ENCODE measurements at regions of chr17 and their contacts with region 1.

Region 1: GRCh38 chr17:21275579-21276263 is 8.8 kb upstream of the MAP2K3 start:
- DNase-seq: peak; percentile 80
- H3K4me3 Mint-ChIP-seq: peak overlapping the region; percentile 77
- H3K27ac Mint-ChIP-seq: peak overlapping the region; percentile 75
- H3K4me1 Mint-ChIP-seq: peaks cover 19% of the 10 kb centered on the region
- H3K27me3 Mint-ChIP-seq: no peaks in the 10 kb centered on the region
- CTCF ChIP-seq: no peak

Region 2: DNA sequence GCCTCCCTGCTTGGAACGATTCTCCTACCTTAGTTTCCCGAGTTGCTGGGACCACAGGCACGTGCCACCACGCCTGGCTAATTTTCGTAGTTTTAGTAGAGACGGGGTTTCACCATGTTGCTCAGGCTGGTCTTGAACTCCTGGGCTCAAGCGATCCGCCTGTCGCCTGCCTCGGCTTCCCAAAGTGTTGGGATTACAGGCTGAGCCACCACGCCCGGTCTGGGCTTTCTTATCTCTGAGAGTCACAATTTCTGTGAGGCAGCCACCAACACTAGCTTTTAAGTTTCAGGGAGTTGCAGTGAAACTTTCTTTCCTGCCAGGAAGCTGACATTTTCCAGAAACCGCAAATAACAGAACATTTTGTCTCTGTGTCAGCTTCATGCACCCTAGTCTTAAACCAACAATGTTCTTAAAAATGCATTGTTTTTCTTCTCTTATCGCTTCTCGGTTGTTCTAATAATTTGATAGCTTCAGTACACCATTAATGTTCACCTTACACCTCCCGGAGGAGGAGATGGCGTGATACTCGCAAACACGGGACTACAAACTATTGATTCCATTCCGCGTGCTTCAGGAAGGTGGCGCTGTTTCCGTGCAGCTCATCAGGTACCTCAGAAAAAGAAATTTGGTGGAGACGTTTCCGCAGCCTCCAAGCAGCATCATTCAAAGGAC is 156.3 kb before region 1 on chr17:
- CTCF ChIA-PET with region 1: interaction called, 13 read pairs
- POLR2A ChIA-PET with region 1: interaction called, 3 read pairs
- intact Hi-C with region 1: no loop called
- DNase-seq: peak; percentile 68
- H3K4me3 Mint-ChIP-seq: no peak overlapping the region
- H3K27ac Mint-ChIP-seq: no peak overlapping the region
- H3K4me1 Mint-ChIP-seq: peaks cover 6% of the 10 kb centered on the region
- H3K27me3 Mint-ChIP-seq: no peaks in the 10 kb centered on the region
- CTCF ChIP-seq: peak; percentile 82

Region 3: GRCh38 chr17:21263351-21263750 is 12.4 kb before region 1 on chr17:
- CTCF ChIA-PET with region 1: interaction called, 7 read pairs
- POLR2A ChIA-PET with region 1: interaction called, 16 read pairs
- intact Hi-C with region 1: no loop called
- DNase-seq: peak; percentile 94
- H3K4me3 Mint-ChIP-seq: no peak overlapping the region
- H3K27ac Mint-ChIP-seq: peak overlapping the region; percentile 52
- H3K4me1 Mint-ChIP-seq: peaks cover 13% of the 10 kb centered on the region
- H3K27me3 Mint-ChIP-seq: no peaks in the 10 kb centered on the region
- CTCF ChIP-seq: no peak

Measured in MCF 10A (cell line).